Sigmoid colon (tissue), 7 donors: ENCODE measurements at regions of chr12 and their contacts with region 1.

Region 1: DNA sequence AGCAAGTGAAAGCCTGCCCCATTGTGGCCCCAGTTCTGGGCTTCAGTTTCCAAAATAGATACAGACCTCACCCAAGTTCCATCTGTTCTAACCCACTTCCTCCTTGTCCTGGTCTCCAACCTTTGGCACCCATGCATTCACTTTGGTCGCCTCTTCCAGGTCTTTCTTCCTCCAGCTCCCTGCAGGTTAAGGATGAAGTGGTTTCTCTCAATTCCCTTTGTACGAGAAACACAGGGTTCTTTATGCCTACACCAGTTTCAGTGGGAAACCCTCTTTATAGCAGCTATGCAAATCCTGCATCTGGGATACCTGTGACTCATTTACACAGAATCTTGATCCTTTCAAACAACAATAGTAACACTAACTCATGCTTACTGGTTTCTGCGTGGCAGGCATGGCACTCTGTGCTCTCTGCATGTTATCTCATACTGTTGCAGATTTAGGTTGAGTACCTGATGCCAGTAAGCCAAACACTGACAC is 110.6 kb upstream of the AMIGO2 start:
- DNase-seq: no peak
- H3K4me3 ChIP-seq: no peak overlapping the region
- H3K27ac ChIP-seq: peak overlapping the region in 2 of 4 donors; percentile 9 to 23
- H3K4me1 ChIP-seq: peaks cover 0 to 55% (median 37%) of the 10 kb centered on the region in 4 donors
- H3K27me3 ChIP-seq: no peaks in the 10 kb centered on the region
- CTCF ChIP-seq: no peak
- EP300 ChIP-seq: no peak
- POLR2A ChIP-seq: no peak

Region 2: DNA sequence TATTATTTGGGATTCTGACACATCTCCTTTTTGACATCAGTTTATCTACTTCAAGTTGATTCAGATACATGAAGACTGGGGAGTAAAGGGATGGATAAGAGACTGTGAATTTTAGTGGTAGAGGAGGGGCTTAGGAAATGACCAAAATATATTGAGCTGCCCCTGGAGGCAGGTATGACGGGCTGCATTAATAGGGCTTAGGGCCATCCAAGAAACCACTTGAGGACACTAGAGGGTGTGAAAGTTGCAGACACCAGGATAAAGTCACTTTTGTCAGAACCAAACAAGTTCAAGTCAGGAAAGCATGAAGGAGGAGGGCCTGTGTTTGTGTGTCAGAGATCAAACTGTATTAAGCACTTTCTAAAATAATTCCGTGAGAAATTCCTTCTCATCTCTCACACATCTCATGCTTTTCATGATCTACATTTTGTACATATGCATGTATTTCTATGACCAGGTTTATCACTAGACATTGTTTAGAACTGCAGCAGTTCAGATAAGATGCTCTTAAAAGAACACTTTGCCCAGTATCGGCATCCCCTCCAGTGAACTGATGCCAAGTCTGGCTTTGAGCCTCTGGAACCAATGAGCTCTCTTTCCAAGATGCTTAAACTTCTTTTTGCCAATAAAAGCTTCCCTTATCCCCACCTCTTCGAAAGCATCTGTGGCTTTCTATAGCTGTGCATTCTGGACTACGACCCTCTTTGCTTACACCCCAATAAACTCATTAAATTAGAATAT is 1058.4 kb before region 1 on chr12:
- intact Hi-C with region 1: no loop called
- DNase-seq: no peak
- H3K4me3 ChIP-seq: no peak overlapping the region
- H3K27ac ChIP-seq: no peak overlapping the region
- H3K4me1 ChIP-seq: peaks cover 0 to 8% (median 6%) of the 10 kb centered on the region in 4 donors
- H3K27me3 ChIP-seq: no peaks in the 10 kb centered on the region
- CTCF ChIP-seq: peak in 3 of 4 experiments; percentile 12 to 33 (median 25)
- EP300 ChIP-seq: no peak
- POLR2A ChIP-seq: no peak

Region 3: DNA sequence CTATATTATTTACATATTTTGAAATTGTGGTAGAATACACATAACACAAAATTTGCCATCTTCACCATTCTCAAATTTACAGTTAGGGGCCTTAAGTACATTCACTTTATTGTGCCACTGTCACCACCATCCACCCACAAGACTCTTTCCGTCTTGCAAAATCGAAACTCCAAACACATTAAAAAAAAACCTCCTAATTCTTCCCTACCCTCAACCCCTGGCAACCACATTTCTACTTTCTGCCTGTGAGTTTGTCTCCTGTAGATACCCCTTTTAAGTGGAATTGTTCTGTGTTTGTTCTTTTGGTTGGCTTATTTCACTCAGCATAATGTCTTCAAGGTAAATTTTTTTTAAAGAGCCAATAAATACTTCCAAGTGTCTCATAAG is 78.9 kb before region 1 on chr12:
- intact Hi-C with region 1: loop called (anchors 5 kb)
- DNase-seq: no peak
- H3K4me3 ChIP-seq: no peak overlapping the region
- H3K27ac ChIP-seq: no peak overlapping the region
- H3K4me1 ChIP-seq: no peaks in the 10 kb centered on the region
- H3K27me3 ChIP-seq: no peaks in the 10 kb centered on the region
- CTCF ChIP-seq: no peak
- EP300 ChIP-seq: no peak
- POLR2A ChIP-seq: no peak

Region 4: DNA sequence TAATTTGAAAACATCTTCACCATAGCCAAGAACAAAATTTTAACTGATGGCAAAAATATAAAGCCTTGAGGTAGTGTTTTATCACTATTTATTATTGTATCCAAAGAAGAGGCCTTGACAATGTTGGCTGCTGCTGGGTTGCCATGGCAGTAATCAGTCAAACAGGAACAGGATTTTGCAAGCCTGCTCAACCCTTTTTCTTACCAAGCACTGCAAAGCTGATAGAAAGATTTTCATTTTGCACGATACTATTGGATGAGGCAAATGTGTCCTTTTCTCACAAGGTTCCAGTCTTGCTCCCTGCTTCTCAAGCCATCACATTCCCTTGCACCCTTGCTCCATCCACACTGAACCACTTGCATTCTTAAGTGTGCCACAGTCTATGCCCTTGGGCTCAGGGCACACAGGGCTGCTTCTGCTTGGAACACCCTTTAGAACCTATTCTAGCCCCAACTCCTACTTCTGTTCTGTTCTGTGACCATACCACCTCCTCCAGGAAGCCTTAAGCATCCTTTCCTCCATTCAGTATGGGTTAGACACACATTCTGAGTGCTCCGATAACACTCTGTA is 34.1 kb before region 1 on chr12:
- intact Hi-C with region 1: loop called (anchors 5 kb)
- DNase-seq: no peak
- H3K4me3 ChIP-seq: no peak overlapping the region
- H3K27ac ChIP-seq: peak overlapping the region in 3 of 4 donors; percentile 10 to 67 (median 59)
- H3K4me1 ChIP-seq: peaks cover 0 to 19% (median 10%) of the 10 kb centered on the region in 4 donors
- H3K27me3 ChIP-seq: no peaks in the 10 kb centered on the region
- CTCF ChIP-seq: no peak
- EP300 ChIP-seq: no peak
- POLR2A ChIP-seq: no peak